ENCODE measurements at regions of chr13 and their contacts with region 1.

Region 1: DNA sequence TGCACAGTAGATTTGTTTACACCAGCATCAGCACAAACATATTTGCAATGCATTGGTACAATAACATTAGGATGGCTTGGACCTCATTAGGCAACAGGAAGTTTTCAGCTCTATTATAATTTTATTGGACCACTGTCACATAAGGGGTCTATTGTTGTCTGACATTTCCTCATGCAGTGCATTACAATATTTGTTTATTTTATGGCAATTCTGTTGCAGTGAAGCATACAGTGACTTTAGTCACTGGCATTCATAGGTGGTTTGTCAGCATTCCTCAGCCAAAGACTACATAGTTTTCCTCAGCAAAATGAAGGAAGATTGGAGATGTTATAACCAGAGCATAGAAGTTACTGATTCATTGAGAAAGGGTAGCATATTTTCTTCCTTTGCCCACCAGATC is 1732.9 kb downstream of the PCDH9 start:
- DNase-seq: peak; percentile 15
- H3K4me3 ChIP-seq: no peak overlapping the region
- H3K27ac ChIP-seq: no peak overlapping the region
- H3K27me3 ChIP-seq: no peaks in the 10 kb centered on the region
- CTCF ChIP-seq: no peak

Region 2: DNA sequence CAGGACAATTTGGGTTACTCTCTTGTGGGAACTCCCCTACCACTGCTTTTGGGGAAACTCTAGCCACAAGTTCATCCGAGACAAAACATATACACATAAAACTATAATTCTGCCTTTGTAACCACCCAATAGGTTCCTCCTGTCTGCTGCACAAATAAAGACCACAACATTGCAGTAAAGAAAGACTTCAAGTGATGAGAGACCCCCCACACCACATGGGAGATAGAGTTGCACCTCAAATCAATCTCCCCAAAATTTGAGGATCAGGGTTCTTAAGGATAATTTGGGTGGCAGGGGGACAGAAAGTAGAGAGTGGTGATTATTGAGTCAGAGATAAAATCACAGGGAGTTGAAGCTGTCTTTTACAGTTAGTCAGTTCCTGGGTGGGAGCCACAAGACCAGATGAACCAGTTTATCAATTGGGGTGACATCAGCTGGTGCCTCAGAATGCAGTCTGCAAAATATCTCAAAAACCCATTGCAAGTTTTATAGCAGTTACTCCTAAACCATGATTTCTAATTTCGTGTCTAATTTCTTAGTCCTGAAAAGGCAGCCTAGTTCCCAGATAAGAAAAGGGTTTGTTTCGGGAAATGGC is 384.4 kb after region 1 on chr13:
- CTCF ChIA-PET with region 1: no interaction called
- POLR2A ChIA-PET with region 1: interaction called, 13 read pairs
- DNase-seq: no peak
- H3K4me3 ChIP-seq: no peak overlapping the region
- H3K27ac ChIP-seq: no peak overlapping the region
- H3K27me3 ChIP-seq: no peaks in the 10 kb centered on the region
- CTCF ChIP-seq: no peak